Heart right ventricle (tissue), 16 donors: ENCODE measurements at regions of chr11 and their contacts with region 1.

Region 1: DNA sequence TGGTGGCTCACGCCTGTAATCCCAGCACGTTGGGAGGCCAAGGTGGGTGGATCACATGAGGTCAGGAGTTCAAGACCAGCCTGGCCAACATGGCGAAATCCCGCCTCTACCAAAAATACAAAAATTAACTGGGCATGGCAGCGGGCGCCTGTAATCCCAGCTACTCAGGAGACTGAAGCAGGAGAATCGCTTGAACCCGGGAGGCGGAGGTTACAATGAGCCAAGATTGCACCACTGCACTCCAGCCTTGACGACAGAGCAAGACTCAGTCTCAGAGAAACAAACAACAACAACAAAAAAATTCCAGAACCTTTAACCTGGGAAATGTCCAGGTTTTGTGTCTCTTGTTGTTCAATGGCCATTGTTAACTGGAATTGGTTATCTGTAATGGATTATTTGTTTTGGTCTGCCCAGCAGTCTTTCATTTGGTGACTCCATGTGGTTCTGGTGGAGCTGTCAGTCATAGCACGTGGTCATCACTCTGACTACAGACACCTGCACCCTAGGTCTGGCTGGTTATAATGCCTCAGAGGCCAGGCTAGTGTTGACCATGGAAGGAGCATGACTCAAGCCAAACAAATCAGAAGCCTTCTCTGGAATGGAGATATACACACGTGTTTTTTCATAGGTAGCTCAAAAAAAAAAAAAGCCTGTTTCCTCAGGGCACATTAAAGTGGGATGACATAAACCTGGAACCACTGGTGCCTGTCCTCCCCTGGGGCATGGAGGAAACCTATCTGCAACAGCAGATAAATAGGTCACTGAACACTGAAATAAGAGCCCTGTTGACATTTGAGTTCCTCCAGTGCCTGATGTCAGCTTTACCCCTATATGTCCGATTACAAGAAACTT is 7.9 kb upstream of the PLAAT3 start:
- DNase-seq: no peak
- ATAC-seq: no peak
- H3K4me3 ChIP-seq: no peak overlapping the region
- H3K27ac ChIP-seq: no peak overlapping the region
- H3K4me1 ChIP-seq: peaks cover 0 to 22% (median 0%) of the 10 kb centered on the region in 9 donors
- H3K27me3 ChIP-seq: no peaks in the 10 kb centered on the region
- CTCF ChIP-seq: no peak

Region 2: GRCh38 chr11:63567044-63567840 is 54.9 kb before region 1 on chr11:
- intact Hi-C with region 1: loop called in 1 of 10 experiments (anchors 10 kb)
- DNase-seq: peak in 1 of 2 donors; percentile 50
- ATAC-seq: peak; percentile 78 to 97 (median 89)
- H3K4me3 ChIP-seq: no peak overlapping the region
- H3K27ac ChIP-seq: peak overlapping the region in 8 of 10 donors; percentile 2 to 63 (median 48)
- H3K4me1 ChIP-seq: peaks cover 0 to 25% (median 12%) of the 10 kb centered on the region in 9 donors
- H3K27me3 ChIP-seq: no peaks in the 10 kb centered on the region
- CTCF ChIP-seq: no peak

Region 3: GRCh38 chr11:63582935-63583677 is 39.1 kb before region 1 on chr11:
- intact Hi-C with region 1: no loop called
- DNase-seq: no peak
- ATAC-seq: no peak
- H3K4me3 ChIP-seq: no peak overlapping the region
- H3K27ac ChIP-seq: peak overlapping the region in 1 of 10 donors; percentile 24
- H3K4me1 ChIP-seq: peaks cover 0 to 10% (median 0%) of the 10 kb centered on the region in 9 donors
- H3K27me3 ChIP-seq: no peaks in the 10 kb centered on the region
- CTCF ChIP-seq: no peak

Region 4: DNA sequence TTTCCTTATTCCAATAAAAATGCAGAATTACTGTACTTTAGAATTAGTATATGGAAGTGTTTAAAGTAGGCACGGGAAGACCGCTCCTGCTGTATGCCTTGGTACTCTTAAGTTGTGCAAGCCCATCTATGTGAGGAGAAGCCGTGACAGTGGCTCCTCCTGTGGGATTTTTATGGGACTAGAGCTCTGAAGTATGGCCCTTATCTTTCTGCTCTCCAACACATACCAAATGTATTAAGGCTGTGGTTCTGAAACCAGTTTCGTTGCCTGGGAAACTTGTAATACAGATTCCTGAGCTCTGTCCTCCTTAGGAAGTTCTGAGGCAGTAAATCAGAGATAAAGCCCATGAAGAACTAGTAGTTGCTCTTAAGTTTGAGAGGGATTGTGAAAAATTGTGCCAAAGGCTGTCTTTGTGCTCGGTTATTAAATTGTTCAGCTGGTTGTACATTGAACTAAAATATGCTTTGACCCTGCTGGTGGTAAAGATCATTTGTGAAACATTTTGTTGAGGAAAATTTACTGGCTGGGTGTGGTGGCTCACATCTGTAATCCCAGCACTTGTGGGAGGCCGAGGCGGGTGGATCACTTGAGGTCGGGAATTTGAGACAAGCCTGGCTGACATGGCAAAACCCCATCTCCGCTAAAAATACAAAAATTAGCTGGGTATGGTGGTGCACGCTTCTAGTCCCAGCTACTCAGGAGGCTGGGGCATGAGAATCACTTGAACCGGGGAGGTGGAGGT is 88.5 kb after region 1 on chr11:
- intact Hi-C with region 1: no loop called
- DNase-seq: no peak
- ATAC-seq: peak in 6 of 8 donors; percentile 55 to 77 (median 70)
- H3K4me3 ChIP-seq: no peak overlapping the region
- H3K27ac ChIP-seq: no peak overlapping the region
- H3K4me1 ChIP-seq: peaks cover 0 to 25% (median 16%) of the 10 kb centered on the region in 9 donors
- H3K27me3 ChIP-seq: no peaks in the 10 kb centered on the region
- CTCF ChIP-seq: peak in 4 of 9 donors; percentile 15 to 25 (median 22)